ENCODE measurements at regions of chr10 and their contacts with region 1.

Region 1: DNA sequence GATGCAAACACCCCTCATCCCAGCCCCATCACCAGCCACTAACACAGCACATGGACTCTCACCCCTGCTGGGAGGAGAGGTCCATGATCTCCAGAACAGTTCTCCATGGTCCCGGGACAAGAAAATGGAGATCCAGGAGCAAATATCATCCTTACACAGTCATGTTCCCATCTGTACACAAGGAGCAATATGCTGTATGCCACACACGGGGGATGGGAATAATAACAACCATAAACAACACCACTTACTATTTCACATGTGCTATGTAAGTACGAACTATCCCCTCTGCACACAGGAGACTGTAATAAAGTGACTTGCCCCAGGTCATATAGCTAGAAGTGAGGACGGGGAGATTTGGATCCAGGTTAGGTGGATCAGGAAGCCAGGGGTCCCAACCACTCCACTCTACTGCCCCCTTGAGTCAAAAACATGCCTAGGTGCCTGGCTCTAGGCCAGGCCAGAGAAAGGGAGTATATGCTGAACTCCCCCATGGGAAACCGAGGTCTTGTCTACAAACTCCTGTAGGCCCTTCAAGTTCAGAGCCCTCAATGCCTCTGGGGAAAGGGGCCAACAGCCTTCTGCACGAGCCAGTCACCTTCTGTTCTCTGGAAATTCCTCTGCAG is 34.1 kb downstream of the LRRC20 start:
- DNase-seq: peak in 1 of 2 experiments; percentile 73
- H3K4me3 ChIP-seq: no peak overlapping the region
- H3K27ac ChIP-seq: no peak overlapping the region
- H3K4me1 ChIP-seq: no peaks in the 10 kb centered on the region
- H3K27me3 ChIP-seq: no peaks in the 10 kb centered on the region
- CTCF ChIP-seq: peak; percentile 72 to 85 (median 78)
- EP300 ChIP-seq: no peak
- POLR2A ChIP-seq: no peak
- RAD21 ChIP-seq: peak; percentile 68 to 82

Region 2: GRCh38 chr10:70221030-70221429 is 127.3 kb before region 1 on chr10:
- CTCF ChIA-PET with region 1: interaction called, 96 read pairs
- POLR2A ChIA-PET with region 1: interaction called, 3 read pairs
- DNase-seq: no peak
- H3K4me3 ChIP-seq: no peak overlapping the region
- H3K27ac ChIP-seq: no peak overlapping the region
- H3K4me1 ChIP-seq: no peaks in the 10 kb centered on the region
- H3K27me3 ChIP-seq: no peaks in the 10 kb centered on the region
- CTCF ChIP-seq: no peak
- EP300 ChIP-seq: no peak
- POLR2A ChIP-seq: no peak
- RAD21 ChIP-seq: no peak

Region 3: DNA sequence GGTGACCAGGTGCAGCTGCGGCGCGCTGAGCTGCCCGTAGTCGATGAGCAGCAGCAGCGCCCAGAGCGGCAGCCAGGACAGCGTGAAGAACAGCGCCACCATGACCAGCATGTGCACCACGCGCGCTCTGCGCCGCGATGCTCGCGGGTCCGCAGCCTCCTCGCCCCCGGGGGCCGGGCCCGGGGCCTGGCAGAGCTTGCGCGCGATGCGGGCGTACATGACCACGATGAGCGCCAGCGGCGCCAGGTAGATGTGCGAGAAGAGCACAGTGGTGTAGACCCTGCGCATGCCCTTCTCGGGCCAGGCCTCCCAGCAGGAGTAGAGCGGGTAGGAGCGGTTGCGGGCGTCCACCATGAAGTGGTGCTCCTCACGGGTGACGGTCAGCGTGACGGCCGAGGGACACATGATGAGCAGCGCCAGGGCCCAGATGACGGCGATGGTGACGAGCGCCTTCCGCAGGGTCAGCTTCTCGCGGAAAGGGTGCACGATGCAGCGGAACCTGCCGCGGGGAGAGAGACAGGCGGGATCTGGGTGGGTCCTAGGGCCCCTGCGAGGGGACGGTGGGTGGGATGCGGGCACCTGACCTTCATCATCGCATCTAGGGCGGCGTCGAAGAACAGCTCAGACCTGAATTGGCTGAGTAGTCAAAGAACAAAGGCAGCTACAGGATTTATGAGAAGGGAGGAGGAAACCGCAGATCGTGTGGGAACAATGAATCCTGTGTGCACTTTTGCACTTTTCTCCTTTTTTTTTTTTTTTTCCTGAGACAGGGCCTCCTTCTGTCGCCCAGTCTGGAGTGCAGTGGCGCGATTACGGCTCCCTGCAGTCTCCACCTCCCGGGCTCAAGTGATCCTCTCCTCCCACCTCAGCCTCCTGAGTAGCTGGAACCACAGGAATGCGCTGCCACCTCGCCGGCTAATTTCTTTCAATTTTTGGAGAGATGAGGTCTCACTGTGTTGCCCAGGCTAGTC is 92.7 kb before region 1 on chr10:
- CTCF ChIA-PET with region 1: interaction called, 329 read pairs
- POLR2A ChIA-PET with region 1: no interaction called
- DNase-seq: no peak
- H3K4me3 ChIP-seq: no peak overlapping the region
- H3K27ac ChIP-seq: no peak overlapping the region
- H3K4me1 ChIP-seq: peaks cover 0 to 2% (median 0%) of the 10 kb centered on the region in 4 experiments; a peak in 1 of 7 replicates
- H3K27me3 ChIP-seq: no peaks in the 10 kb centered on the region
- CTCF ChIP-seq: no peak
- EP300 ChIP-seq: no peak
- POLR2A ChIP-seq: no peak
- RAD21 ChIP-seq: no peak

Region 4: DNA sequence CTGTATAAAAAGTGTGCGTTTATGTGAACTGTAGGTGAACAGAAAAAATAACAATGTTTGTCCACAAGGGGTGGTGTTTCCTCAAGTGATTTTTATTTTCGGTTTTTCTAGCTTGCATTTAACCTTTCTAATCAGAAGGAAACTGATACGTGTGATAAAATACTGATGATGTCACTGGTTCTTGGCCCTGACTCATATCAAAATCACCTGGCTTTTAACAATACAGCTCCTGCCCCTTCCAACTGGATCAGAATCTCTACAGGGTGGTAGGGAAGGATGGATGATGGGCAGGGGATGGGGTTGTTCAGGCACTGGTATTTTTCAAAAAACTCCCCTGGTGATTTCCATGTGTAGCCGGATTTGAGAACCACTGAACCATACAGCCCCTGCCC is 75.4 kb before region 1 on chr10:
- CTCF ChIA-PET with region 1: interaction called, 329 read pairs
- POLR2A ChIA-PET with region 1: no interaction called
- DNase-seq: no peak
- H3K4me3 ChIP-seq: no peak overlapping the region
- H3K27ac ChIP-seq: no peak overlapping the region
- H3K4me1 ChIP-seq: 0 out of 7 replicates have a peak, but pooled peaks cover 0 to 5% (median 0%) of the 10 kb centered on the region in 4 experiments
- H3K27me3 ChIP-seq: no peaks in the 10 kb centered on the region
- CTCF ChIP-seq: peak in 1 of 3 experiments; percentile 29; a peak in 2 of 4 replicates
- EP300 ChIP-seq: no peak
- POLR2A ChIP-seq: no peak
- RAD21 ChIP-seq: 0 out of 4 replicates have a peak, but pooled peaks of 1 of the 2 experiments have one; percentile 7

Region 5: GRCh38 chr10:70324339-70324861 is 23.9 kb before region 1 on chr10:
- CTCF ChIA-PET with region 1: interaction called, 40 read pairs
- POLR2A ChIA-PET with region 1: no interaction called
- DNase-seq: no peak
- H3K4me3 ChIP-seq: no peak overlapping the region
- H3K27ac ChIP-seq: no peak overlapping the region
- H3K4me1 ChIP-seq: peaks cover 0 to 17% (median 9%) of the 10 kb centered on the region in 4 experiments; a peak in 6 of 7 replicates
- H3K27me3 ChIP-seq: no peaks in the 10 kb centered on the region
- CTCF ChIP-seq: no peak
- EP300 ChIP-seq: no peak
- POLR2A ChIP-seq: no peak
- RAD21 ChIP-seq: no peak

Region 6: GRCh38 chr10:70363971-70364771 is 15.8 kb after region 1 on chr10:
- CTCF ChIA-PET with region 1: interaction called, 79 read pairs
- POLR2A ChIA-PET with region 1: interaction called, 4 read pairs
- DNase-seq: peak; percentile 76 to 92
- H3K4me3 ChIP-seq: no peak overlapping the region
- H3K27ac ChIP-seq: peak overlapping the region; percentile 71; the same call in 1 of the 2 replicates
- H3K4me1 ChIP-seq: peaks cover under 1 to 11% (median 3%) of the 10 kb centered on the region in 4 experiments; a peak in 5 of 7 replicates
- H3K27me3 ChIP-seq: no peaks in the 10 kb centered on the region
- CTCF ChIP-seq: peak; percentile 80 to 99 (median 97)
- EP300 ChIP-seq: peak in 1 of 2 experiments; percentile 32; a peak in 1 of 3 replicates
- POLR2A ChIP-seq: no peak
- RAD21 ChIP-seq: peak; percentile 96 to 98

Measured in H1 (cell line).